GM18951 (cell line): ENCODE measurements at regions of chr13 and their contacts with region 1.

Region 1: DNA sequence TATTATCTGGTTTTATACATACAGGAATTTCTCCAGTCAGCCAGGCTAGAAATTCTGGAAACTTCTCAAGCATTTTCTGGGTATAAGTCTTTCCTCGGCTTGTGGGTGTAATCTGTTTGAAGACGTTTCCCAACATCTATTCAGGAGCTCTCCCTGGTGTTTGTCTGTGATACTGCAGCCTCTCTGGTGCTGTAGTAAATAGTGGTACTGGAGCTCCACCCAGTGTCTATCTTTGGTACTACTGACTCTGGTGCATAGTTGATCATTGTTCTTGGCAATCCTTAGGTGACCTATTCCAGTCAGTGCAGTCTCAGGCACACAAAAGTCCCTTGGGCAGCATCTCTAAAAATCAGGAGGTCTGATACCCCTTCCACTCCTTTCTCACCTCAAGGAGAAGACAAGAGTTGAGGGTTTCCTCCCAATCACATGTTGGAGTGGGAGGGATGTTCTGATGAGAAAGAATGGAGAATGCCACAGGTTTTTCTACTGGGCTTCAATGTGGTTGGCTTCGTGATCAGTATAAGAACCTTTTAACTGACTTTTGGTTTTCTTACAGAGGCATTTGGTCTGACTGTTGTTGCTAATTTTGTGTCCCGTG is 115.5 kb downstream of the CYSLTR2 start:
- POLR2A ChIP-seq: no peak

Region 2: DNA sequence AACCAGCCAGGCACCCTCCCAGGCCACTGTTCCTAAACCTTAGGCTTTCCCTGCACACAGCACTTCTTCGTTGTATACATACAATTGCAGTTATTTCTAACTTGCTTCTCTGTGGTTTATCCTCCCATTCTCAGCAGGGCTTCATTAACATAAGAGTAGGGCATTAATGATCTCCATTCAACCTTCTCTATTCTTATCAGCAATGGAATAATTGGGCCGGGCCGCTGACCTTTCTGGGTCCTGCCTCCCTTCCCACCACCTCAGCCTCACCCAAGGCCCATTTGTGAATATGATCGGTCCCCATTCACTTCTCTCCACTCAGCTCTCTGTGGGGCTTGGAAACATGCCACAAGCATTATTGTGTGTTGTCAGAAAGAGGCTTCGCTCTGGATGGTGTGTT is 952.4 kb before region 1 on chr13:
- in situ Hi-C with region 1: loop called (anchors 25 kb)
- POLR2A ChIP-seq: no peak

Region 3: DNA sequence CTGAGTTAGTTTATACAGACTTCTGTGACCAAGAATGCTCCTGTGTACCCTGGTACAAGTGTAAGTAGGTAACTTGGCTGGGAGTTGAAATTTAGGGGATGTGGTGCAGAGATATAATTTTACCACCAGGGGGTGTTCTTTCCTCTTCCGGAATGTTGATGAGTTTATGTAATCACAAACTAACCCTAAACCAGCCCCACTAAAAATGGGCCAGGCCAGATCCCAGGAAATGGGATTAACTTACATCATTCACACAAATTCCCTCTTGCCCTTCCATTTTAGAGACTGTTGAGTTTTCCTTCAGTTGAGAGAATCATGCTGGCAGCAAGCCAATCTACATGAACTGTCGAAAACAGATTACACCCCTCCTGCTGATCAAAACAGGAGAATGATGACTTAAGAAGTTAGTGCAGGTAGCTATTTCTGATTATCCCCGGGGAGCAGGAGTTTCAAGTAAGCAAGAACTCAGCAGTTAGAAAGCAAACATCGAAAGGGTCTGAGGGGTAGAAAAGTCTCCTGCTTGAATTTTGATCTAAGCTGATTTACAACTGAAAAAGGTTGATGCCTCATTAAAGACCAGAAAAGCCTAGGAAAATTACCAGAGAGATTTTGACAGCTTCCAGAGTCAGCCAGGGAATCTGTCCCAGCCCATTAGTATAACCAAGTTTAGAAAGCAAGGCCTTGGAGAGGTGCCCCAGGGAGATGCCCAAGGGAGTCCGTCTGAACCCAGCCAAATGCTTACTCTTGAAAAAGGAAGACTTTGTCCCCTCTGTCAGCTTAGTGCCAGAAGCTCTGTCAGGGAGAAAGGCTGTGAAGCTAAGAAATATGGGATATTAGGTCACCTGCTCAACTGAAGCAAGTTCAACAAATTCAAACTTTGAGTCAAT is 642.0 kb before region 1 on chr13:
- in situ Hi-C with region 1: loop called (anchors 10 kb)
- POLR2A ChIP-seq: no peak

Region 4: DNA sequence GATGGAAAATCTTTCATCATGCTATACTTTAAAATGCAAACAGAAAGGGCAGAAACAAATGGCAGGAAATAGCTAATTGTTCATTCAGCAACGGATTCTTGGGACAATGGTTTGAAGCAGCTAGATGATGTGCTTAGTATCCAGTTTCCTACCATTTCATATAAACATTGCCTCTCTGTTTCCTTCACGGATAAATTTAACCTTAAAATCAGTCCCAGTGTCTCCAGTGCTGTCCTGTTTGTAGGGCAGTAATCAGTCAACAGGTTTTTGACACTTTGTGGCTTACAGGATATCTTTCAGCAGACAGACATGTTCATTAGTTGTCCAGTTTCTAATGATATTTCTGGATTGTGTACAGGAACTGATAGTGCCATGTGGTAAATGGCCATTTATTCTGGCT is 490.4 kb before region 1 on chr13:
- in situ Hi-C with region 1: no loop called
- POLR2A ChIP-seq: no peak

Region 5: DNA sequence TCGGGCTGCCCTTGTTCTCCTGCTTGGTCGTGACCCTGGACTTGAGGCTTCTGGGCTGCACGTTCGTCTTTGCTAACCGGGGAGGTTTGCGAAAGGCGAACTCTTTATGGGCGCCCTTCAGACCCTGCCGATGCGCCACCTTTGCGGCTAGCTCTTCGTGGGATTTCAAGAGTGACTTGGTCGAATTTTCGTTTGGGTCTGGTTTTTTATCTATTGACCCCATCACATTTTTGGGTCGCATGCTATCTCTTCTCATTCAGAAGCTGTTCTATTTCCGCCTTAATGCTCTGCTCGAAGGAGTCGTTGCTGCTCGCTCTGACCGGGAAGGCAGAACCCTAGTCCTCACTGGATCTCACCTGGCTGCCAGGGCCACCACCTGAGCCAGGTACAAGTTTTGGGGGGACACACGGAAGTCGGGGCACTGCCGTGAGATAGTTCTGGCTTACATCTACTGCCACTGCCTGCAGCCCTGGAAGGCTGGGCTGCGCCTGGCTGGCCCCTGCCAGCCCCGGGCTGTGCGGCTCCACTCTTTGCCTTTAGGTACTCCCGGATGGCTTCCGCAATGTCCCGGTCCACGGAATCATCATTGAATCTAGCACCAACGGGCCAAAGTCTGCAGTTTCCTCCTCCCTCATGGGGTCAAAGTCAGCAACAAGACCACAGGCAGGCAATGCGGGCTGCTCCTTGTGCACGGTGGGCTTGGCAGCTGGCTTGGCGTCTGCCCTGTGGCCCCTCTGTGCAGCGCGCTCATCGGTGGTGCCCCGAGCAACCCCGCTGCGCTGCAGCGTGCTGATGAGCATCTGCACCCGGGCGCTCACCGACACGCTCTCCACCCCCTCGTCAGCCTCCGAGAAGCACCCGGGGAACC is 449.4 kb before region 1 on chr13:
- in situ Hi-C with region 1: loop called (anchors 10 kb)
- POLR2A ChIP-seq: no peak

Region 6: GRCh38 chr13:48838193-48839000 is 69.2 kb after region 1 on chr13:
- in situ Hi-C with region 1: no loop called
- POLR2A ChIP-seq: no peak

Region 7: DNA sequence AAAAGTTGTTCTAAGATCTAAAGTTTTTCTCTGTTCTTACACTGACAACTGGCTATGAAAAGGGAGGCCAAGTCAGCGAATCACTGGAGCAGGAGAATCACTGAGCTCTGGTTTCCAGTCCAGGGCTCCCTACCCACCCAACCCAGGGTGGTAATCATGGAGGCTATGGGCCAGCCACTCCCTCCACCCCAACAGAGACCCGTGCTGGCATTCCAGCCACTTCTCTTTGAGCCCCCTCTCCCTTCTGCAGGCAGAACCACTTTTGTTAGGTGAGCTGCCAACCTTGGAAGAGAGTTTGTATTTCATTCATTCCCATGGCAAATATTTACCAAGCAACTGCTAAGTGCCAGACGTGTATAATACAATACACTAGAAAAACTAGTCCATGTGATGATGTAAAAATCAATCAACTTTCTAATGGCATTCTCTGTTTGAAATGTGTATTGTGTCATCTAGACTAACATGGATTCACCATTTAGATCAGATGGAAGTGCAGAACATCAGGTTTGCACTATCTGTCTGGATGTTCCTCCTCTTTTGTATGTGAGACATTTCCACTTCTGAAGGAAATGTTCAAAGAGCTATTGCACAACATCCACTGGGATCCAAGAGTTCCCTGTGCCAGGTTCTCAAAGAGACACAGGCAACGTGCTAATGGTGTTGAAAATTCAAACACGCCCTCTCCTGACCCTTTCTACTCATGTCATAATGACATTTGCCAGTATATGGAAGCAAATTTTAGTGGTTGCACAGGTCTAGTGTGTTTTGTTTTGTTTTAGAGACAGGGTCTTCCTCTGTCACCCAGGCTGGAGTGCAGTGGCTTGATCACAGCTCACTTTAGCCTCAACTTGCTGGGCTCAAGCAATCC is 456.3 kb after region 1 on chr13:
- in situ Hi-C with region 1: no loop called
- POLR2A ChIP-seq: no peak